ENCODE measurements at regions of chr12 and their contacts with region 1.

Region 1: DNA sequence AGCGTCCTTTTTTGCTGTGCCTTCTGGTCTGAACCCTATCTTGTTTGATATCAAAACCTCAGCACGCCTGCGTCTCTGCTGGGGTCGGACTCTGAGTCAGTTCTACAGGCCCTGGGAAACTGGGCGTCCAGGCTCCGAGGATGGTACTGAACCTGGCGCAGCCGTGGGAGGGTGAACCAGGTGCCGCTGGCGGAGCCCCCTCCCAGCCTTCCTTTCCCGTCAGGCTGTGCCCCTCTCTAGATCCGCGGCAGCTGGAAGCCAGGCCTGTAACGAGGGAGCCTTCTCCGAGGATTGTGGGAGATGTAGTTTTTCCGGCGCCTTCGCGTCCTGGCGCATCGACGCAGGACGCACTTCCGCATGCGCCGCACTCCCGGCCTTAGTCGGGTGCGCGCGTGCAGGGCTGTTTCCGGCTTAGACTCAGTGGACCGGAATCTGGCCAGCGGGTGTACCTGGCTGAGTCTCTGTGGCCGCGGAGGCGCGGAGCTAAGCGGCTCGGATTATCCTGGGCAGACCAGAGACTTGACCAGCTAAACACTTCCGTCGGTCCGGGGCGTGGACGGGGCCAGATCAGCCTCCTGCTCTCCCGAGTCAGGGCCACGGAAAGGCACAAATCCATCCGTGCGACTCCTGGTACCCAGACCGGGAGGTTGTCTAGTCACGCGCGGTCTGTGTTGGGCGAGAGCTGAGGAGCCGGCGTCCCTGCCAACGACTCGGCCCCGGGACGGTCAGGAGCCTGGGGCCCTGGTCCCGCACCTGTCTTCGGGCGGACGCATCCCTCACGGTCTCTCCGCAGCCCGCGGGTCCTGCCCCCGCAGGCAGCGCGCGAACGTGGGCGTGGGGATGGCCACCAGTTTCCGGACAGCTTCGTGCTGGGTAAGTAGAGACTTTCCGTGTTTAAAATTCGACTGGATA is at the start of gene ZNF26:
- DNase-seq: peak; percentile 80
- ATAC-seq: peak; percentile 93
- H3K4me3 Mint-ChIP-seq: peak within 1 kb of the TSS; percentile 95
- H3K27ac Mint-ChIP-seq: peak within 1 kb of the TSS; percentile 94
- H3K4me1 Mint-ChIP-seq: peaks cover 23% of the 10 kb centered on the region
- H3K27me3 Mint-ChIP-seq: no peaks in the 10 kb centered on the region
- CTCF ChIP-seq: no peak
- total RNA-seq, gene ZNF26: 20.8 and 24.9 TPM in 2 replicates

Region 2: GRCh38 chr12:132710422-132711168 is 275.7 kb before region 1 on chr12 and contains the start of gene PGAM5:
- CTCF ChIA-PET with region 1: no interaction called
- POLR2A ChIA-PET with region 1: no interaction called
- intact Hi-C with region 1: loop called (anchors 1 kb)
- DNase-seq: peak; percentile 96
- ATAC-seq: peak; percentile 93
- H3K4me3 Mint-ChIP-seq: peak within 1 kb of the TSS; percentile 92
- H3K27ac Mint-ChIP-seq: peak within 1 kb of the TSS; percentile 95
- H3K4me1 Mint-ChIP-seq: peaks cover 33% of the 10 kb centered on the region
- H3K27me3 Mint-ChIP-seq: no peaks in the 10 kb centered on the region
- CTCF ChIP-seq: no peak
- total RNA-seq, gene PGAM5: 44.0 and 48.7 TPM in 2 replicates

Region 3: GRCh38 chr12:132828706-132829534 is 157.3 kb before region 1 on chr12 and contains the start of gene GOLGA3:
- CTCF ChIA-PET with region 1: no interaction called
- POLR2A ChIA-PET with region 1: interaction called, 3 read pairs
- intact Hi-C with region 1: loop called (anchors 1 kb)
- DNase-seq: peak; percentile 95
- ATAC-seq: peak; percentile 92
- H3K4me3 Mint-ChIP-seq: peak within 1 kb of the TSS; percentile 96
- H3K27ac Mint-ChIP-seq: peak within 1 kb of the TSS; percentile 100
- H3K4me1 Mint-ChIP-seq: peaks cover 50% of the 10 kb centered on the region
- H3K27me3 Mint-ChIP-seq: no peaks in the 10 kb centered on the region
- CTCF ChIP-seq: no peak
- total RNA-seq, gene GOLGA3: 51.3 and 52.4 TPM in 2 replicates

Region 4: DNA sequence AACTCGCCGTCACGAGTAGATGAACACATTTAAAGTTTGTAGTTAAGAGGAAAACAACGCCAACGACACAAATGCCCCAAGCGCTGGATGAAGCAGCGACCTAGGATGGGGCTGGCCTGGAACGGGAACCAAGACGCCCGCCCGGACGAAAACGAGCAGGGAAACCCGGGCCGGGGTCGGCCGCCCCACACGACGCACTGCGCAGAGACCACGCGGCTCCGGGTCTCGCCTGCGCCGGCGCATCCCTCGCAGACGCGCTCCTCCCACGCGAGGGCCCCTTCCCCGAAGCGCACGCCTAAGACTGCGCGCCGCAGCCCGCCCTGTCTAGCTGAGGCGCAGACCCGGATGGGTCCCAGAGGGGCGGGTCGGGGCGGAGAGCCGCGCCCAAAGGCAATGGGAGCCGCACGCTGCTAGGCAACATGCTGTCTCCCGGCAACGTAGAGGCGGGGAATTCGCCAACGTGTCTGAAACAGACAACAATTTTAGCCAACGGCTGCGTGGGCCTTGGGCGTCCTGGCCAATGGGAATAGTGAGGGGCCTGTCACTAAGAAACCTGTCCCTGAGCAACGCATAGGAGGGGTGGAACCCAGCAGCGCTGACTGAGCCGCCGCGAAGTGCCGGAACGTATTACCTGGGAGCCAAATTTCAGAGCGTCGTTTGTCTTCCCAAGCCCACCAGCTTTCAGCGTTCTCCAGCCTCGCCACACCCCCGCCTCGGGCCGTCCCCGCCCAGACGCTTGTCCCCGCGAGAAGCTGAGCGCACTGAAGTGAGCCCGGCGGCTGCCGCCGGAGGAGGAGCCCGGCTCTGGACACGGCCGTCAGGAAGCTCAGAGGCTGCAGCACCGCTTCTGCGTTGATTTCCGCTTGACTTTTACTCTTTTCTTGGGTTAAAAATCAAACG is 77.9 kb before region 1 on chr12:
- CTCF ChIA-PET with region 1: no interaction called
- POLR2A ChIA-PET with region 1: interaction called, 11 read pairs
- intact Hi-C with region 1: loop called (anchors 1 kb)
- DNase-seq: peak; percentile 91
- ATAC-seq: peak; percentile 90
- H3K4me3 Mint-ChIP-seq: peak overlapping the region; percentile 94
- H3K27ac Mint-ChIP-seq: peak overlapping the region; percentile 96
- H3K4me1 Mint-ChIP-seq: peaks cover 13% of the 10 kb centered on the region
- H3K27me3 Mint-ChIP-seq: peaks cover 2% of the 10 kb centered on the region
- CTCF ChIP-seq: no peak

Region 5: GRCh38 chr12:133026996-133027395 is 40.7 kb after region 1 on chr12:
- CTCF ChIA-PET with region 1: no interaction called
- POLR2A ChIA-PET with region 1: interaction called, 10 read pairs
- intact Hi-C with region 1: no loop called
- DNase-seq: no peak
- ATAC-seq: no peak
- H3K4me3 Mint-ChIP-seq: no peak overlapping the region
- H3K27ac Mint-ChIP-seq: no peak overlapping the region
- H3K4me1 Mint-ChIP-seq: no peaks in the 10 kb centered on the region
- H3K27me3 Mint-ChIP-seq: no peaks in the 10 kb centered on the region
- CTCF ChIP-seq: no peak

Region 6: DNA sequence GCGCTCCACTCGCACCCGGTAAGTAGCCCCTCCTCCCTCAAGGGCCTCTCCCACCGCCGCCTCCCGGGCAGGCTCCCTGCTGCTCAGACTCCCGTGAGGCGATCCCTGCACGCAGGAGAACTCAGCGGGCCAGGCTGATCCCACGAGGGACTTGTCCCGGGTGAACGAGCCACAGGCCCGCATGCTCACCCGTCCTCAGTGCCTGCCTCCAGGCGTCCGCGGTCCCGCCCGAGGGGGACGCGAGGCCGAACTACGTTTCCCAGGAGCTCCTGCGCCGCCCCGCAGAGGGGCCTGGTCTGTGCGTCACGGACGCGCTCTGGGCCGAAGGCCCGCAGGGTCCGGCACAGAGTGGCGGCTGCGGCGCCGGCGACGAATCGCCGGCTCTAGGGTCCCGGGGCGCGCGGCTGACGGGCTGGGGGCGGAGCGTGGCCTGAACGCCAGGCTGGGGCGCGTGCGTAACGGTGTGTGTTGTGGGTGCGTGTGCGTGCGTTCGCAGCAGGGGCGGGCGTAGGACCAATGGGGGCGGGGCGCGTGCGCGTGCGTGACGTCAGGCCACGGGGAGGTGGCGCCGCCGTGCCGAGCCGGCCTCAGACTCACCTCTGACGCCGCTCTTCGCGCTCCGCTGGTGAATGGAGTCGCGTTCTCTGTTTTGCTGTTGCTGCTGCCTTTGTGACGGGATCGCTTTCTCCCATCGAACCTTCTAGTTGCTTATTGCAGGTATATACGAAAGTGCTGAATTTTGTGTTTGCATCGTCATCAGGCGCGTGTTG is 144.0 kb after region 1 on chr12 and contains the starts of genes ZNF10 and ZNF891:
- CTCF ChIA-PET with region 1: no interaction called
- POLR2A ChIA-PET with region 1: interaction called, 5 read pairs
- intact Hi-C with region 1: loop called (anchors 1 kb)
- DNase-seq: peak; percentile 99
- ATAC-seq: peak; percentile 86
- H3K4me3 Mint-ChIP-seq: peak within 1 kb of the TSS; percentile 95
- H3K27ac Mint-ChIP-seq: peak within 1 kb of the TSS; percentile 98
- H3K4me1 Mint-ChIP-seq: peaks cover 21% of the 10 kb centered on the region
- H3K27me3 Mint-ChIP-seq: no peaks in the 10 kb centered on the region
- CTCF ChIP-seq: no peak
- total RNA-seq, gene ZNF10: 8.4 and 10.9 TPM in 2 replicates
- total RNA-seq, gene ZNF891: 2.9 and 4.0 TPM in 2 replicates